Caco-2 (cell line): ENCODE measurements at regions of chr1 and their contacts with region 1.

Region 1: GRCh38 chr1:89358287-89358893 is 5.5 kb upstream of the GBP6 start:
- DNase-seq: peak; percentile 68 to 69
- H3K4me3 ChIP-seq: no peak overlapping the region
- H3K4me3 Mint-ChIP-seq: peak overlapping the region; percentile 13
- H3K27ac Mint-ChIP-seq: no peak overlapping the region
- H3K4me1 ChIP-seq: peaks cover 19% of the 10 kb centered on the region
- H3K4me1 Mint-ChIP-seq: peaks cover 14% of the 10 kb centered on the region
- H3K27me3 ChIP-seq: no peaks in the 10 kb centered on the region
- H3K27me3 Mint-ChIP-seq: no peaks in the 10 kb centered on the region
- CTCF ChIP-seq: peak; percentile 43 to 57

Region 2: DNA sequence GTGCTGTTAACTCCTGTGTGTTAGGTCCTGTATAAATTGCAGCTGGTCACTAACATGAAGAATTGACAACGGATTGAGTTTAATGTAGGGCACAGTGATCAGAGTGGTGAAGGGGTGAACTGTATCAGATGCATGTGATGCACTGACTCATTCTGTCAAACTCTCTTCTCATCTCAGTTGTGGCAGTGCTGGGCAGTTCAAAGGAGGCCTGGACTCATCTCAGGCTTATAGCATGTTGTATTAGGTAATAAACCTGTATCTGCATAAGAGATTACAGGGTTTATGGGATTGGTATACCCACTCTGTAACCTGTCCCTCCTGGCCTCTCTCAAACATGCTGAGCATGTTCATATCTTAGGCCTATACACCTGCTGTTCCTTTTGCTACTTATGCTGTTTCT is 323.3 kb before region 1 on chr1:
- CTCF ChIA-PET with region 1: no interaction called
- POLR2A ChIA-PET with region 1: no interaction called
- intact Hi-C with region 1: no loop called
- DNase-seq: no peak
- H3K4me3 ChIP-seq: no peak overlapping the region
- H3K4me3 Mint-ChIP-seq: no peak overlapping the region
- H3K27ac Mint-ChIP-seq: no peak overlapping the region
- H3K4me1 ChIP-seq: no peaks in the 10 kb centered on the region
- H3K4me1 Mint-ChIP-seq: no peaks in the 10 kb centered on the region
- H3K27me3 ChIP-seq: no peaks in the 10 kb centered on the region
- H3K27me3 Mint-ChIP-seq: peaks cover 5% of the 10 kb centered on the region
- CTCF ChIP-seq: no peak

Region 3: DNA sequence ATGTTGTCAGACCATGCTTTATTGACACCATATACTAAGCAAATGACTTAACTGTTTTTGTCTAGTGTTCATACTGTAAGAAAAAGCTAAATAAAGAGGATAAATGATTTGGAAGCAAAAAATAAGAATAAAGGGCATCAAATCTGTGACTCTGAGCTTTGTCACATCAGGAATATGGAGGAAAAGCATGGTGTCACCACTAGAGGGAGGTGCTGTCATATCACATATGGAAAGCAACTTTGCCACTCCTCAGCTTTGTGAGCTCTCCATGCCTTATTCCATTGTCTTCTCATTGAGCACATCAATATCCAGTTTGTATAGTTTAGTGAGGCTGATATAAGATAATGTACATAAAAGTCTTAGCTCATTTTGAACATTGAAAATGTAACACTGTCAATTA is 272.6 kb before region 1 on chr1:
- CTCF ChIA-PET with region 1: interaction called, 3 read pairs
- POLR2A ChIA-PET with region 1: no interaction called
- intact Hi-C with region 1: loop called (anchors 1 kb)
- DNase-seq: peak; percentile 22 to 36
- H3K4me3 ChIP-seq: no peak overlapping the region
- H3K4me3 Mint-ChIP-seq: no peak overlapping the region
- H3K27ac Mint-ChIP-seq: no peak overlapping the region
- H3K4me1 ChIP-seq: peaks cover 6% of the 10 kb centered on the region; the same call in 1 of the 2 replicates
- H3K4me1 Mint-ChIP-seq: no peaks in the 10 kb centered on the region
- H3K27me3 ChIP-seq: no peaks in the 10 kb centered on the region
- H3K27me3 Mint-ChIP-seq: no peaks in the 10 kb centered on the region
- CTCF ChIP-seq: peak; percentile 34 to 35

Region 4: GRCh38 chr1:89331890-89332289 is 26.5 kb before region 1 on chr1:
- CTCF ChIA-PET with region 1: interaction called, 6 read pairs
- POLR2A ChIA-PET with region 1: no interaction called
- intact Hi-C with region 1: loop called (anchors 1 kb)
- DNase-seq: peak in 1 of 2 experiments; percentile 13
- H3K4me3 ChIP-seq: no peak overlapping the region
- H3K4me3 Mint-ChIP-seq: no peak overlapping the region
- H3K27ac Mint-ChIP-seq: no peak overlapping the region
- H3K4me1 ChIP-seq: no peaks in the 10 kb centered on the region
- H3K4me1 Mint-ChIP-seq: no peaks in the 10 kb centered on the region
- H3K27me3 ChIP-seq: no peaks in the 10 kb centered on the region
- H3K27me3 Mint-ChIP-seq: peaks cover 5% of the 10 kb centered on the region
- CTCF ChIP-seq: no peak

Region 5: GRCh38 chr1:89503690-89504089 is 145.3 kb after region 1 on chr1:
- CTCF ChIA-PET with region 1: no interaction called
- POLR2A ChIA-PET with region 1: no interaction called
- intact Hi-C with region 1: no loop called
- DNase-seq: no peak
- H3K4me3 ChIP-seq: no peak overlapping the region
- H3K4me3 Mint-ChIP-seq: no peak overlapping the region
- H3K27ac Mint-ChIP-seq: no peak overlapping the region
- H3K4me1 ChIP-seq: no peaks in the 10 kb centered on the region
- H3K4me1 Mint-ChIP-seq: no peaks in the 10 kb centered on the region
- H3K27me3 ChIP-seq: no peaks in the 10 kb centered on the region
- H3K27me3 Mint-ChIP-seq: no peaks in the 10 kb centered on the region
- CTCF ChIP-seq: no peak